ENCODE measurements at regions of chr17 and their contacts with region 1.

Region 1: GRCh38 chr17:72556944-72557826 is 436.4 kb downstream of the SOX9 start:
- DNase-seq: peak; percentile 83 to 93
- ATAC-seq: peak; percentile 51 to 62
- H3K4me3 ChIP-seq: no peak overlapping the region
- H3K27ac ChIP-seq: peak overlapping the region in 1 of 2 experiments; percentile 61; a peak in 3 of 6 replicates
- H3K4me1 ChIP-seq: peaks cover 45% of the 10 kb centered on the region
- CTCF ChIP-seq: peak; percentile 97
- EP300 ChIP-seq: no peak
- POLR2A ChIP-seq: no peak
- RAD21 ChIP-seq: peak; percentile 94

Region 2: DNA sequence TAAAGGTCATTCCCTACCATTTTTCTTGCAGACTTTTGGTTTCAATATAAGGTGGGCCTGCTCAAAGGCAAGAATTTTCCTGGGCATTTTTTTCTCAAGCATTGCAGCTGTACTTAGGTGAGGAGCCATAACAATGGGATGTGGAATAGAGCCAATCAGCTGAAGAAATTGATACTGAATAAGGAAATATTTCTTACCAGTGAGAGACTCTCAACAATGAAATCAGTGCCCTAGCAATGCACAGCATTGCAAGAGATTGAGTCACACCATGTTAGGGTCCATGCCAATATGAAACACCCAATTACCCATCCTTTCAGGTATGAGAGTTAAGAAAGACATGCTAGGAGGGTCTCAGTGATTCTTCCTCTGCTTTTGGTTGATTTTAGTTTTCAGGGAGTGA is 198.7 kb before region 1 on chr17:
- CTCF ChIA-PET with region 1: no interaction called
- POLR2A ChIA-PET with region 1: no interaction called
- DNase-seq: peak in 1 of 2 experiments; percentile 49
- ATAC-seq: peak in 1 of 2 experiments; percentile 36; a peak in 2 of 6 replicates
- H3K4me3 ChIP-seq: no peak overlapping the region
- H3K27ac ChIP-seq: peak overlapping the region in 1 of 2 experiments; percentile 34; a peak in 2 of 6 replicates
- H3K4me1 ChIP-seq: peaks cover 41% of the 10 kb centered on the region
- CTCF ChIP-seq: no peak
- EP300 ChIP-seq: no peak
- POLR2A ChIP-seq: no peak
- RAD21 ChIP-seq: no peak

Region 3: DNA sequence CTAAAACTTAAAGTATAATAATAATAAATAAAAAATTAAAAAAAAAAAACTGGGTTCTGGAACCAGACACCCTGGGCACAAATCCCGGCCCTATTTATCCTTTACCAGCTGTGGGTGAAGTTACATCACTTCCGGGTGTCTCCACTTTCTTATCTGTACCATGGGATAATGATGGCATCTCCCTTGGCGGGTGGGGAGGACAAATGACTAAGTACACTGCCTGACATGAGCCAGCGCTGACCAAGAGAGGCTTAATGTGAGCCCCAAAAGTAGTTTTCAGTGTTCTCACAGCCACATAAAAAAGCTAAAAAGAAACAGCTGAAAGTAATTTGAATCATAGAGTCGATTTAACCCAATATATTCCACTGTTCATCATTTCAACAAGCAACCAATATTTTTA is 11.4 kb before region 1 on chr17:
- CTCF ChIA-PET with region 1: interaction called, 37 read pairs
- POLR2A ChIA-PET with region 1: no interaction called
- DNase-seq: no peak
- ATAC-seq: no peak
- H3K4me3 ChIP-seq: no peak overlapping the region
- H3K27ac ChIP-seq: no peak overlapping the region
- H3K4me1 ChIP-seq: peaks cover under 1% of the 10 kb centered on the region; the same call in 1 of the 3 replicates
- CTCF ChIP-seq: no peak
- EP300 ChIP-seq: no peak
- POLR2A ChIP-seq: no peak
- RAD21 ChIP-seq: no peak

Region 4: DNA sequence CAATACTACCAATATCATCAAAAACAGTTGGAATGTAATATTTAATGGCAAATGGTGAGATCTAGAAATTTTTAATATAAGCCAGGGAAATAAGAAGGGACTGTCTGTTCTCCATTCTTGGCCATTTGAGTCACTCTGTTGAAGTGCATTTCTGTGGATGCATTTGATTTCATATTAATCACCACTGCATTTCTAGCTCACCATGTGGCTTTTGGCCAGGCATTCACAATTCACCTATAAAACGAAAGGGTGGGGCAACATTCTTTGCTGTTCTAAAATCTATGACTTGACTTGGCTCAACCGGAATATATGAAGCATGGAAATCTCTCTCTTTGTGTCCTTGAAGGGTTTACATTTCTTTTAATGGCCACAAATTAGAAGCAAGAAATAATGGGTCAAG is 52.3 kb after region 1 on chr17:
- CTCF ChIA-PET with region 1: interaction called, 112 read pairs
- POLR2A ChIA-PET with region 1: no interaction called
- DNase-seq: peak; percentile 64 to 80
- ATAC-seq: peak in 1 of 2 experiments; percentile 46; a peak in 4 of 6 replicates
- H3K4me3 ChIP-seq: no peak overlapping the region
- H3K27ac ChIP-seq: peak overlapping the region; percentile 82 to 89
- H3K4me1 ChIP-seq: peaks cover 64% of the 10 kb centered on the region
- CTCF ChIP-seq: no peak
- EP300 ChIP-seq: peak in 1 of 2 experiments; percentile 24; a peak in 1 of 5 replicates
- POLR2A ChIP-seq: no peak
- RAD21 ChIP-seq: no peak; a peak in 1 of 5 replicates

Region 5: GRCh38 chr17:72654706-72655355 is 97.6 kb after region 1 on chr17:
- CTCF ChIA-PET with region 1: interaction called, 72 read pairs
- POLR2A ChIA-PET with region 1: no interaction called
- DNase-seq: no peak
- ATAC-seq: no peak
- H3K4me3 ChIP-seq: no peak overlapping the region
- H3K27ac ChIP-seq: peak overlapping the region in 1 of 2 experiments; percentile 77; a peak in 3 of 6 replicates
- H3K4me1 ChIP-seq: peaks cover 17% of the 10 kb centered on the region
- CTCF ChIP-seq: no peak
- EP300 ChIP-seq: no peak
- POLR2A ChIP-seq: no peak
- RAD21 ChIP-seq: no peak

Region 6: GRCh38 chr17:72699545-72699944 is 142.4 kb after region 1 on chr17:
- CTCF ChIA-PET with region 1: interaction called, 240 read pairs
- POLR2A ChIA-PET with region 1: no interaction called
- DNase-seq: no peak
- ATAC-seq: no peak
- H3K4me3 ChIP-seq: no peak overlapping the region
- H3K27ac ChIP-seq: peak overlapping the region; percentile 55 to 85
- H3K4me1 ChIP-seq: peaks cover 53% of the 10 kb centered on the region
- CTCF ChIP-seq: no peak
- EP300 ChIP-seq: no peak
- POLR2A ChIP-seq: no peak
- RAD21 ChIP-seq: no peak

Region 7: DNA sequence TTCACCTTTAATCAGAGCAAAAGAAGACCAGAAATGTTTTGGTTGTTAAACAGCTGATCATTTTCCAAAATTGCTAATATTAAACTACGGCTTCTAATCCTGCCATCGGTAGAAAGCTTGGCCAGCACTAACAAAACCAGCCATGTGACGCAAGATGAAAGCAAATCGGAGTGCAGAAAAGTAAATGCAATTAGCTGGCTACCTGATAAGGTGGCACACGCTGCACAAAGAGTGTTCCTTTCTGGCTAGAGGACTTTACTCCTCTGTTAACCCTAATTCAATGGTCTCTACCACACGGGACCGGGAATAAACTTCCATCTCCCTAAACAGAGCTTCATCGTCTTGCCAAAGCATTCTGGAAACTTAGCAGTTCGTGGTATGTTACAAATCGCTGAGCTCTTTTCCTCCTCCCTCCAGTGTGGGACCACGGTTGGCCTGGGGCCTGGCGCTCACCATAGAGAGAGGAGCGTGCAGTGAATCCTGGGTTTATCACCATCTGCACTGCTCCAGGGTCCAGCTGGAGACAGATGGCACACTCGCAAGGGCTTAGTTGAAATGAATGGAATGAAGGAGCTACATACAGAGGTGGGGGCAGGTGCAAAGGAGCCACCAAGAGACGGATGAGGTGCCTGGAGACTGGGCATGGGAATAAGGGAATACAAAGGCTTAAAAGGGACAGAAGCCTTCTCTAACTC is 625.6 kb after region 1 on chr17:
- CTCF ChIA-PET with region 1: interaction called, 46 read pairs
- POLR2A ChIA-PET with region 1: no interaction called
- DNase-seq: no peak
- ATAC-seq: no peak
- H3K4me3 ChIP-seq: no peak overlapping the region
- H3K27ac ChIP-seq: no peak overlapping the region
- H3K4me1 ChIP-seq: peaks cover 7% of the 10 kb centered on the region; the same call in 1 of the 3 replicates
- CTCF ChIP-seq: no peak
- EP300 ChIP-seq: no peak
- POLR2A ChIP-seq: no peak
- RAD21 ChIP-seq: no peak